Right ventricle myocardium inferior (tissue), 1 donor: ENCODE measurements at regions of chr7 and their contacts with region 1.

Region 1: GRCh38 chr7:111953611-111954010 is 252.6 kb downstream of the DOCK4 start:
- DNase-seq: no peak
- ATAC-seq: peak; percentile 73

Region 2: DNA sequence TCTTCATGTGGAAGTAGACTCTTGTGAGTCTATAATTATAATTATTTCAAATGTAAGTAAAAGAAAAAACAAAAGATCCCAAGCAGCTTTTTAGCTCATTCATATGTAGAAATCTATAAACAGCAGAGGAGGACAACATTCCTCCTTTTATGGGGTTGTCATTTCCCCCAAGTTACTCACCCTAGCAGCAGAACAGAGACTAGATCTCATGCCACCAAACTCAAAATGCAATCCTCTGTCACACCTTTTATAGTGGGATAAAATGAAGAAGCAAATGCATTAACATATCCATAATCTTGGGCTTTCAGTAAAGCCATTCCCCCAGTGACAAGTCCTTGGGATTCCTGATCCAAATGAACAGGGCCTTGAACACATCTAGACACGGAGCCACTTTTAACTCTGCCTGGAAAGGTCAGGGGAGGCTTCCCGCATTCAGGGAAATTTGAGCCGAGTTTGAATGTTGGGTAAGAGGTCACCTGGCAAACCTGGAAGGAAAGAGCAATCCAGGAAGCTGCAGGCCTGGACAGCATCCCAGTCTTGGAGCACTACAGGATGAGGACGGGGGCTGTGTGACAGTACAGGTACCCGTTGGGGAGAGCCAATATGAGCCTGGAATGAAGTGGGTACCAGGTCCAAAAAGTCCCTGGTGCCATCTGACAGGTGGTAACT is 176.2 kb after region 1 on chr7:
- intact Hi-C with region 1: loop called (anchors 10 kb)
- DNase-seq: no peak
- ATAC-seq: peak; percentile 19